ENCODE measurements at regions of chr12 and their contacts with region 1.

Region 1: DNA sequence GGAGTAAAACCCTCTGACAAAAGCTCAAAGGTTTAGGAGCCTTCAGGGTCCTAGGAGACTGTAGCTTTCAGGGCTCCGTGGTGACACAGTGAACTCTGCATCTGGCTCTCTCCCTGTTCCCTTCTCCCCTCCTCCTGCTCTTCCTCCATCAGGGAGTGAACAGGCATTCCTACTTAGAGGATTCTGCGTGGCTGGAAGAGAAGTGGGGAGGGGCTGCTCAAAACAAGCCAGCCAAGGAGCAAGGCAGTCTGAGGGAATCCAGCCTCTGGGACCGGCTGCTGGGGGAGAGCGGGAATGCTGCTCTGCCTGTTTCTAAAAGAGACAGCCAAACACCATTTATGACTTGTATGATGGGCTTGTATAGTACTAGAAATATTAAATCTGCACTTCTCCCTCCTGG is 49.5 kb downstream of the RBMS2 start:
- DNase-seq: no peak
- ATAC-seq: no peak
- H3K4me3 Mint-ChIP-seq: no peak overlapping the region
- H3K27ac Mint-ChIP-seq: no peak overlapping the region
- H3K4me1 Mint-ChIP-seq: peaks cover 23% of the 10 kb centered on the region
- H3K27me3 Mint-ChIP-seq: no peaks in the 10 kb centered on the region

Region 2: GRCh38 chr12:56521590-56522371 is 49.3 kb before region 1 on chr12 and contains the start of gene RBMS2:
- CTCF ChIA-PET with region 1: interaction called, 16 read pairs
- DNase-seq: peak; percentile 71
- ATAC-seq: peak; percentile 93
- H3K4me3 Mint-ChIP-seq: peak within 1 kb of the TSS; percentile 77
- H3K27ac Mint-ChIP-seq: peak within 1 kb of the TSS; percentile 77
- H3K4me1 Mint-ChIP-seq: peaks cover 34% of the 10 kb centered on the region
- H3K27me3 Mint-ChIP-seq: no peaks in the 10 kb centered on the region
- total RNA-seq, gene RBMS2: 9.3 to 10.0 TPM

Region 3: DNA sequence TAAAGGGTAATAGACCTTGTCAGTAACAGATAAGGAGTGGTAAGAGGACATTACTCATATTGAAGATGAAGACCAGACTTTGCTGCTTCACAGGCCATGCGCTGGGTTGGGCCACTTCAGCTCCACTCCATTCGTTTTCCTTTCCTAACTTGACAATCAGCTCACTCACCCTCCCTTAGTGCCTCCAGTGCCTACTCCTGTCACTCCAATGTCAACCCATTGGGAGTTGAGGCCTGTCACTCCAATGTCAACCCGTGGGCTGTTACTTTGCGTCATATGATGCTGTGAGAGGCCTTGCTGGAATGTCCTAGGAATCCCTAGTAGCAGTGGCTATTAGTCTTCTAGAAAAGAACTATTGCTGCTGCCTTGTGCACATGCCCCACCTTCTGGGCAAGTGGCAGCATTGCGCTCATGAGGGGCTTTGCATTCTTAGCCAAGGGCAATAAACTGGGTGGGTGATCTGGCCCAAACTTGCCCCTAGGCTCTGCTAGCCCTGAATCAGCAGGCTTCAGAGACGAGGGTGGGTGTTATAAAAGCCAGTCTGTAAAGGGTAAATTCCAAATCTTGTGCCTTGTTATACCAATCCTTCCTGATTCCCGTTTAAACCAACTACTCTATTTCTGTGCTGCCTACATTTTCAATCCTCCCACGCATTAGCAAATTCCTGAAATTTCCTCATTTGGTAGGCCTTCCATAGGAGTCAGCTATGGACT is 22.9 kb after region 1 on chr12:
- CTCF ChIA-PET with region 1: interaction called, 23 read pairs
- DNase-seq: peak; percentile 79
- ATAC-seq: peak; percentile 66
- H3K4me3 Mint-ChIP-seq: no peak overlapping the region
- H3K27ac Mint-ChIP-seq: peak overlapping the region; percentile 43
- H3K4me1 Mint-ChIP-seq: peaks cover 2% of the 10 kb centered on the region
- H3K27me3 Mint-ChIP-seq: no peaks in the 10 kb centered on the region

Measured in activated CD8-positive, alpha-beta memory T cell treated with anti-CD3 and anti-CD28 coated beads, Interleukin-2, amount 10 ng/mL, durations not matched to agents 7 days and 5 days (primary cell).